ENCODE measurements at regions of chr1 and their contacts with region 1.

Region 1: DNA sequence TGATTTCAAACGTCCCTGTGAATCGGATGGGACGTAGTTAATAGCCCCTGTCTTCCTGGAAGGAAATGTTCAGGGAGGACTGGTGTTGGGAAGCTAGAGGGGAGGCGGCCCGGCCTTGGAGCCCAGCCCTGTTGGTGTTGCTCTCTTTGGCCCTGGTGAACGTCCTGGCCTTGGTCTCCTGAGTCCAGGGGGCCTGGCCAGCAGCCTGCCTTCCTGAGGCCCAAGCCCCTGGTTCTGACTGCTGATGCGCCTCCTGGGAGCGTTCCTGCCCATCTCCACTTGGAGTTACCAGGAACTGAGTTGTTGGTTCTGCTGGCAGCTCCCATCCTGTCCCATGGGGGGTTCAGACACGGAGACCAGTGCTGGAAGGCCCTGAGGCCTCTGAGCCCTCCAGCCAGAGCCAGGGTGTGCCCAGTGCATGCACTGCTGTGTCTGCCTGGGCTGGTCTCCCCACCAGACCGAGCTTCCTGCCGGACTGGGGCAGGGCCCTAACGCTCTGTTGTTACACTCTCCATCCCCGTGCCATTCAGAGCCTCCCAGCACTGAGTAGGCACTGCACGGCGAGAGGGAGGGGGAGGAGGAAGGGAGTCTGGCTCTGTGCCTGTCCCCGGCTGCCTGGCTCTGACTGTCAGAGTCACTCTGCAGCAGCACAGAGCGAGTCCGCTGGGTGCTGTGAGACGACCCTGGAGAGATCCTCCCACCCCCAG is 382.5 kb upstream of the VAMP3 start:
- DNase-seq: peak; percentile 57 to 94 (median 79)

Region 2: DNA sequence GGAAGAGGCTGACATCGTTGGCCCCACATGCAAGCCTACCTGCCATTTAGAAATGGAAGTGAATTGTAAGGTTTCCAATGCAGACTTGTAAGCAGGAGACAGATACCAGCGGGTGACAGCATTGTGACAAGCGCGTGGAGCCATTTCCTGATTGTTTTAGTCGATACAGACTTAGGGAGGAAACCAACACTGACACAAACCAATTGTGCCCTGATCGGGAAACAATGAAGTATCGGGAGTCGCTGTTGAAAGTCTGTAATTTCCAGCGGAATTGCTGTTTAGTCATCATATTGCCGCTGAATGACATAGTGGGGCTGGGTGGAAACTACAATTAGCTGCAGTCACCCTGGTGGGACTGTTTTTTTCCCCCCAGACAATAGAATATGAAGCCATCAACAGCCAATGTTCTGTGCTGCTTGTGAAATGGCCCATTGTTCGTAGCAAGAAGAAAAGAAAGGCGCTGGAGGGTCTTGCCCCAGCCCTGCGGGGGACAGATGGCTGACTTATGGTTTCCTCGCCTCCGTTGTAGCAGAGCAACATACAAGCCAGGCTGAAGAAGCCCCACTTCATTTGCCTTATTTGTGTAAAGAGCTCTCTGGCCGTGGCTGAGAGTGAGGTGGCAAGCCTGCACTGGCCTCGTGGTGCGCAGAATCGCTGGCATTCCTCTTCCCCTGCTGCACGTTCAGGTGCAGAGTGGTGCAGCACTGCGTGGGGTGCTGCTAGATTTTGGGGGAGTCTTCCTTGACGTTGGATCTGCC is 140.7 kb before region 1 on chr1:
- intact Hi-C with region 1: no loop called
- DNase-seq: peak in 27 of 42 donors; percentile 8 to 71 (median 33)

Region 3: DNA sequence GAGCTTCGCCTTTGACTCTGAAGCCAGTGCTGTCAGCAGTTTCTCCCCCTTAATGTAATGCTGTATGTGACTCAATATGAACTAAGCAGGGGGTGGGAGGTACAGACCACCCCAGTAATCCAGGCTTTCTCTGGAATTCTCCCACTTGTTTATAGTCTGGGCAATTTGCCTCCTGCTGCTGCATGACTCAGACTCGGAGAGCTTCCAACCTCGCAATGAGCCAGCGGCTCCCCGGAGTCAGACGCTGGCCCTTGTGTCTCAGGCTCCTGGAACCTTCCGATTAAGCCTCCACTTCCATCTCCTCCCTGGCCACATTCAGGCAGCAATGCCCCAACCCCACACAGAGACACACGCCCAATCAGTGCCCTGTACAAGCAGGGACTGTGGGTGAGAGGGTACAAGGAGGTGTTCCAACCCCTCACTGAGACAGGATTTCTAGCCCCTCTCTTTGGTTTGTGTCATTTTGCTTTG is 89.3 kb before region 1 on chr1:
- intact Hi-C with region 1: loop called (anchors 10 kb)
- DNase-seq: peak; percentile 35 to 90 (median 68)

Measured in head of caudate nucleus (tissue), 42 donors.